OCI-LY7 (cell line): ENCODE measurements at regions of chr5 and their contacts with region 1.

Region 1: GRCh38 chr5:109468737-109469420 is 59.1 kb upstream of the PJA2 start:
- DNase-seq: peak; percentile 91
- H3K4me3 ChIP-seq: no peak overlapping the region
- H3K27ac ChIP-seq: no peak overlapping the region
- H3K4me1 ChIP-seq: peaks cover 5% of the 10 kb centered on the region
- CTCF ChIP-seq: peak; percentile 88

Region 2: DNA sequence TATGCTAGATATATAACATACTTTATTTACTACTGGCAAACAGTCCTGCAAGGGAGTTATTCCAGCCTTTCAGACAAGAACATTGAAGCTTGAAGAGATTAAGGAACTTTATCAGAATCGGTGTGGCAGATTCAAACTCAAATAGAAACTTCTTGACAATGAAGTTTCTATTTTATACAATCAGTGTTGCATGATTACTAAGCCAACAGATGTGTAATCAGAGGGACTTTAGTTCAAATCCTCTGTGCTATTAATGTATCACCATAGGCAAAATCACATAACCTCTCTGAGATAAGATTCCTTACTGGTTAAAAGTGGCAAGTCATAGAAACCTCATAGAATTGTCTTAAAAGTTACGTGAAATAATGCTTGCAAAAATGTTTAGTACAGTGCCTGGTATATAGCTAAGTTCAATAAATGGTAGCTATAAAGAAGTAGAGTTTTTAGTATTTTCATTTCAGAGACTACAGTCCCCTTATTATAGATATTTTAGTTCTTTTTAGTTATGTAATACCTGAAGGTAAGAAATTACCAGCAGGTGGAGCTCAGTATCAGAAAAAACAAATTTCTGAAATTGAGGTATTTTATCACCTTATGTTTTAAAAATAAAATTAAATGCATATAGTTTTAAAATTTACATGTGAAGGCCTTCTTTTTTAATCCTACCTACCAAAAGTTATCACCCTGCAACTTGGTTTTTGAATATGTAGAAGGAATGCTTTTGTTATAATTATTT is 549.1 kb before region 1 on chr5:
- CTCF ChIA-PET with region 1: no interaction called
- POLR2A ChIA-PET with region 1: interaction called, 3 read pairs
- intact Hi-C with region 1: loop called (anchors 5 kb)
- DNase-seq: peak; percentile 3
- H3K4me3 ChIP-seq: no peak overlapping the region
- H3K27ac ChIP-seq: no peak overlapping the region
- H3K4me1 ChIP-seq: no peaks in the 10 kb centered on the region
- CTCF ChIP-seq: peak; percentile 75

Region 3: GRCh38 chr5:109365653-109366052 is 103.2 kb before region 1 on chr5:
- CTCF ChIA-PET with region 1: no interaction called
- POLR2A ChIA-PET with region 1: no interaction called
- intact Hi-C with region 1: loop called (anchors 10 kb)
- DNase-seq: no peak
- H3K4me3 ChIP-seq: no peak overlapping the region
- H3K27ac ChIP-seq: no peak overlapping the region
- H3K4me1 ChIP-seq: no peaks in the 10 kb centered on the region
- CTCF ChIP-seq: no peak

Region 4: DNA sequence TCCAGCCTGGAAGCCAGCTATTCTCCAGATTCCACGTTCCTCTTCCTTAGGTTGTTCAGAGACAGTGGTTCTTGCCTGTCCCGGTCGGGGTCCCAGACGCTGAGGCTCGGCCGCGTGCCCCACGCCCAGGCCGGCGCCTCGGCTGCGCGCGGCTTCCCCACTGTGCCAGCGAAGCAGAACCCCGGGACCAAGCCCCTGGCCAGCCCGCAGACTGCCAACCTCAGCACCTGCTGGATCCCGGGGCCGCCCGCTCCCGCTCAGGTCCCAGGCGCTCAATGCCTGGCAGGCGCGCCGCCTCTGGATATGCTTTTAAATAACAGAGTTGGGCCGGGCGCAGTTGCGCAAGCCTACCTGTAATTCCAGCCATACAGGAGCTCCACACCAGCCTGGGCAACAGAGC is 416.3 kb after region 1 on chr5:
- CTCF ChIA-PET with region 1: no interaction called
- POLR2A ChIA-PET with region 1: no interaction called
- intact Hi-C with region 1: no loop called
- DNase-seq: no peak
- H3K4me3 ChIP-seq: no peak overlapping the region
- H3K27ac ChIP-seq: no peak overlapping the region
- H3K4me1 ChIP-seq: no peaks in the 10 kb centered on the region
- CTCF ChIP-seq: no peak